Esophagus squamous epithelium (tissue), 5 donors: ENCODE measurements at regions of chr1 and their contacts with region 1.

Region 1: DNA sequence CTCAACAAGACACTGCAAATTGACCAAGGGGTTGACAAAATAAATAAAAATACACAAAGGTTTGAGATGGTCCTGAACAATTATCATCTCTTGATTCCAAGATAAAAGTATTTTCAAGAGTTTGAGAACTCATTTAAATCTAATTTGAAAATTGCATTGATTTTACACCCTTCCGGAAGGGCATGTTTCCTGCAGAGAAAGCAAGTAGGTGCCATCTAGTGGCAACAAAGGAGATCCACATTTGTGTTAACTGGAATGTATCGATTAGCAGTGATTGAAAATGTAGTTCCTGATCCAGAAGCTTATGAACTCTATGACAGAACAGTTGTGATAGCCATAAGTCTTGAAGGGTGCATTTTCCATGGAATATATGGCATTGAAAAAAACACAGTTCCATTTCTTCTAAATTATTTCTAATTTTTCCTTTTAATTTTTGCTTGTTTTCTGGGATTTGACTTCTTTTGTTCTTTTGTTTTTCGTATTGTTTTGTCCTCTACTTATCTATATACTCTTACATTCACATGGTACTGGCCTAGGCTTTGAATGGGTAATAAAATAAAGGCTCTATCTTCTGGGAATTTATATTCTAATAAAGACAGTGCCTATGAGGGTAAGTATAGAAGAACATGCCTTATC is 143.7 kb downstream of the DNM3 start:
- DNase-seq: no peak
- H3K4me3 ChIP-seq: no peak overlapping the region
- H3K27ac ChIP-seq: no peak overlapping the region
- H3K4me1 ChIP-seq: peaks cover 0 to 8% (median 0%) of the 10 kb centered on the region in 3 donors
- H3K27me3 ChIP-seq: no peaks in the 10 kb centered on the region
- CTCF ChIP-seq: peak; percentile 60 to 76 (median 65)
- POLR2A ChIP-seq: no peak

Region 2: GRCh38 chr1:171636141-171636540 is 348.8 kb before region 1 on chr1:
- intact Hi-C with region 1: loop called (anchors 10 kb)
- DNase-seq: no peak
- H3K4me3 ChIP-seq: no peak overlapping the region
- H3K27ac ChIP-seq: no peak overlapping the region
- H3K4me1 ChIP-seq: no peaks in the 10 kb centered on the region
- H3K27me3 ChIP-seq: no peaks in the 10 kb centered on the region
- CTCF ChIP-seq: no peak
- POLR2A ChIP-seq: no peak

Region 3: GRCh38 chr1:171801487-171801891 is 183.5 kb before region 1 on chr1:
- intact Hi-C with region 1: loop called (anchors 5 kb)
- DNase-seq: no peak
- H3K4me3 ChIP-seq: no peak overlapping the region
- H3K27ac ChIP-seq: no peak overlapping the region
- H3K4me1 ChIP-seq: no peaks in the 10 kb centered on the region
- H3K27me3 ChIP-seq: no peaks in the 10 kb centered on the region
- CTCF ChIP-seq: peak; percentile 51 to 77 (median 68)
- POLR2A ChIP-seq: no peak